B cell (primary cell): ENCODE measurements at regions of chr1 and their contacts with region 1.

Region 1: GRCh38 chr1:15028102-15028501 is 125.4 kb upstream of the TMEM51 start:
- DNase-seq: no peak
- ATAC-seq: no peak
- H3K4me3 ChIP-seq: no peak overlapping the region
- H3K4me3 Mint-ChIP-seq: no peak overlapping the region
- H3K27ac ChIP-seq: no peak overlapping the region
- H3K27ac Mint-ChIP-seq: no peak overlapping the region
- H3K4me1 ChIP-seq: no peaks in the 10 kb centered on the region
- H3K4me1 Mint-ChIP-seq: no peaks in the 10 kb centered on the region
- H3K27me3 ChIP-seq: no peaks in the 10 kb centered on the region
- H3K27me3 Mint-ChIP-seq: no peaks in the 10 kb centered on the region
- CTCF ChIP-seq: no peak

Region 2: GRCh38 chr1:14778898-14779865 is 248.9 kb before region 1 on chr1:
- CTCF ChIA-PET with region 1: interaction called, 7 read pairs
- POLR2A ChIA-PET with region 1: no interaction called
- intact Hi-C with region 1: loop called (anchors 5 kb)
- DNase-seq: peak; percentile 27
- ATAC-seq: no peak
- H3K4me3 ChIP-seq: no peak overlapping the region
- H3K4me3 Mint-ChIP-seq: no peak overlapping the region
- H3K27ac ChIP-seq: no peak overlapping the region
- H3K27ac Mint-ChIP-seq: no peak overlapping the region
- H3K4me1 ChIP-seq: no peaks in the 10 kb centered on the region
- H3K4me1 Mint-ChIP-seq: no peaks in the 10 kb centered on the region
- H3K27me3 ChIP-seq: no peaks in the 10 kb centered on the region
- H3K27me3 Mint-ChIP-seq: peaks cover 8% of the 10 kb centered on the region
- CTCF ChIP-seq: peak; percentile 74

Region 3: GRCh38 chr1:15370781-15371520 is 342.8 kb after region 1 on chr1:
- CTCF ChIA-PET with region 1: no interaction called
- POLR2A ChIA-PET with region 1: no interaction called
- intact Hi-C with region 1: no loop called
- DNase-seq: no peak
- ATAC-seq: no peak
- H3K4me3 ChIP-seq: no peak overlapping the region
- H3K4me3 Mint-ChIP-seq: no peak overlapping the region
- H3K27ac ChIP-seq: no peak overlapping the region
- H3K27ac Mint-ChIP-seq: no peak overlapping the region
- H3K4me1 ChIP-seq: no peaks in the 10 kb centered on the region
- H3K4me1 Mint-ChIP-seq: no peaks in the 10 kb centered on the region
- H3K27me3 ChIP-seq: peaks cover 0 to 3% (median 0%) of the 10 kb centered on the region in 4 experiments
- H3K27me3 Mint-ChIP-seq: peaks cover 32% of the 10 kb centered on the region
- CTCF ChIP-seq: no peak